Activated CD4-positive, alpha-beta T cell treated with anti-CD3 and anti-CD28 coated beads for 36 hours (primary cell): ENCODE measurements at regions of chr9 and their contacts with region 1.

Region 1: DNA sequence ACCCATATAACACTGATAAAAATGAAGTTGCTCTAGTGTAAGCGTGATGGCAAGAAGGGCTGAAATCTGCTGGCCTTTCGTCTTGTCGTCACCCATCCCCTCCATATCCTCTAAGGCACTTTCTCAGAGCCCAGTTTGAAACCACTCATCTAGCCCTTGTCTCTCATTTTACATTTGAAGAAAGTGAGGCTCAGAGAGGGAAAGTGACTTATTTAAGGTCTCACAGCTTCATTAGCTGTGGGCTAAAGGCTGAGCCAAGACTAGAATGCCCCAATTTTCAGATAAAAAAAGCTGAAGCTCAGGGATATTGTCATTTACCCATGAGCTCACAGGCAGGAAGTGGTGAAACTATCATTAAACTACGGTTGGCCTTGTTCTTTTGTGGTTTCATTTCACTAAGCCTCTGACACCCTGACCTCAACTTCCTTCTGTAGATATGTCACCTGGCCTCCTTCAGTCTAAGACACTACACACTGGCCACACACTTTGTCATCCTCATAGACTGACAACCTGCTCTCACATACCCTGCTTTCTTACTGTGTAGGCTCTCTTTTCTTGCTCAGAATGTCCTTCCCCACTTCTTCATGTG is 176.7 kb upstream of the DMAC1 start:
- DNase-seq: peak; percentile 60
- ATAC-seq: peak; percentile 95
- H3K4me3 Mint-ChIP-seq: peak overlapping the region; percentile 32
- H3K27ac Mint-ChIP-seq: peak overlapping the region; percentile 82
- H3K4me1 Mint-ChIP-seq: peaks cover 62% of the 10 kb centered on the region
- H3K27me3 Mint-ChIP-seq: no peaks in the 10 kb centered on the region

Region 2: DNA sequence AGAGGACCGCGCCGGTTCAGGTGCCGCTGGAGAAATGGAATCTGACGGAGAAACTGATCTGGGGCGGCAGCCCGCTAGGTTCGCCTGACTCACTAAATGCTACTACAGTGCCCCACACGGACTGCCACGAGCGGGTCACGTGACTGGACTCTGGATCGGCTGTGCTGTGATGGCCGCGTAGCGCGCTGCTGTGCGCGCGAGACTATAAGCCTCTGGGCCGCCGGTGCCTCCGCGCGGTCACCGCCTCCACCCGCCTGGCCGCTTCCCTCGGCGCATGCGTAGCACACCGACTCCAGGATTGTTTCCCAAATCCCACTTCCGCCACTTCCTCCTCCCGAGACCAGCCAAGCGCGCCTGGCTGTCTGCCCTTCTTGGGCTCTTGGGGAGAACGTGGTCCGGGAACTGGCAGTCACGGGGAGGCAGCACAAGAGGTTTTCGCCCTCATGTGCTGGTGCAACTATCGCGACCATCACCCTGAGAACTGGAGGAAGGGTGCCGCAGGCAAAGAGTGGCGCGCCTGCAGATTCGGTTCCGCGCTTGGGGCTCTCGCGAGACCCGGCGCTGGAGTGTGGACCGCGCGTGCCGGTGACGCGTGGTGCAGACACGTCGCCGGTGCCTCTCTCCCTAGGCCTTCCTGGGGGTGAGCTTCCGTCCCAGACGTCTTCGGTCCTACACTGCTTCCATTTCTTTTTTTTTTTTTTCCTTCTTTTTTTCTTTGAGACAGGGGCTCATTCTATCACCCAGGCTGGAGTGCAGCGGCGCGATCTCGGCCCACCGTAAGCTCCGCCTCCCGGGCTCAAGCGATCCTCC is 1294.9 kb before region 1 on chr9:
- CTCF ChIA-PET with region 1: no interaction called
- POLR2A ChIA-PET with region 1: no interaction called
- intact Hi-C with region 1: loop called in 1 of 2 experiments (anchors 5 kb)
- DNase-seq: peak; percentile 96
- ATAC-seq: peak; percentile 88
- H3K4me3 Mint-ChIP-seq: peak overlapping the region; percentile 88
- H3K27ac Mint-ChIP-seq: peak overlapping the region; percentile 99
- H3K4me1 Mint-ChIP-seq: peaks cover 19% of the 10 kb centered on the region
- H3K27me3 Mint-ChIP-seq: no peaks in the 10 kb centered on the region

Region 3: GRCh38 chr9:7756088-7756487 is 220.2 kb before region 1 on chr9:
- CTCF ChIA-PET with region 1: no interaction called
- POLR2A ChIA-PET with region 1: no interaction called
- intact Hi-C with region 1: loop called in 1 of 2 experiments (anchors 2 kb)
- DNase-seq: peak; percentile 30
- ATAC-seq: peak; percentile 99
- H3K4me3 Mint-ChIP-seq: no peak overlapping the region
- H3K27ac Mint-ChIP-seq: peak overlapping the region; percentile 74
- H3K4me1 Mint-ChIP-seq: peaks cover 19% of the 10 kb centered on the region
- H3K27me3 Mint-ChIP-seq: no peaks in the 10 kb centered on the region

Region 4: DNA sequence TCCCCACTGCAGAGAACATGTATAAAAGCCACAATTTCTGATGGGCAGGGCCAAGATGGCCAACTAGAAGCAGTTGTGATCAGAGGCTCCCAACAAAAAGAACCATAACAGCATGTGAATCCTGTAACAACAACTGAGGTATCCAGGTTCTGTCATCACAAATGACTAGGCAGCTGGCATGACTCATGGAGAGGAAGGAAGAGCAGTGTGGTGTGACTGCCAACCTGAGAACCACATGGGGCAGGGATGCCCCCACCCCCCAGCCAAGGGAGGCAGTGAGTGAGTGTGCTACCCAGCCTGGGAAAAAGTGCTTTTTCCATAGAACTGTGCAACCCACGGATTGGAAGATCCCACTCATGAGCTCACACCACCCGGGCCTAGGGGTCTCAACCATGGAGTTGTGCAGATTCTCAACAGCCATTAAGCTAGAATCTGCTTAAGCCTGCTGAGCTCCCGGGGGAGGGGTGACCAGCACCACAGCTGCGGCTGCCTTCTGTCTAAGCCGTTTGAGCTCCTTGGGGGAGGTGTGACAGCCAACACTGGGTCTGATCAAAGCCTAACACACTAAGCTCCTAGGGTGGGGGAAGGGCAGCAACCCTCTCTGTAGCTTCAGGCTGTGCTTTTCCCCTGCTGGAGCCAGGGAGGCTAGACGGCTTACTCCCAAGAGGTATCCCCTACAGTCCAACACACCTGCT is 96.6 kb before region 1 on chr9:
- CTCF ChIA-PET with region 1: no interaction called
- POLR2A ChIA-PET with region 1: no interaction called
- intact Hi-C with region 1: loop called in 1 of 2 experiments (anchors 1 kb)
- DNase-seq: peak; percentile 72
- ATAC-seq: peak; percentile 96
- H3K4me3 Mint-ChIP-seq: no peak overlapping the region
- H3K27ac Mint-ChIP-seq: peak overlapping the region; percentile 26
- H3K4me1 Mint-ChIP-seq: peaks cover 12% of the 10 kb centered on the region
- H3K27me3 Mint-ChIP-seq: peaks cover 2% of the 10 kb centered on the region

Region 5: GRCh38 chr9:8115570-8115969 is 139.3 kb after region 1 on chr9:
- CTCF ChIA-PET with region 1: no interaction called
- POLR2A ChIA-PET with region 1: interaction called, 3 read pairs
- intact Hi-C with region 1: loop called (anchors 1 to 10 kb)
- DNase-seq: peak; percentile 13
- ATAC-seq: peak; percentile 80
- H3K4me3 Mint-ChIP-seq: no peak overlapping the region
- H3K27ac Mint-ChIP-seq: peak overlapping the region; percentile 40
- H3K4me1 Mint-ChIP-seq: peaks cover 21% of the 10 kb centered on the region
- H3K27me3 Mint-ChIP-seq: no peaks in the 10 kb centered on the region

Region 6: DNA sequence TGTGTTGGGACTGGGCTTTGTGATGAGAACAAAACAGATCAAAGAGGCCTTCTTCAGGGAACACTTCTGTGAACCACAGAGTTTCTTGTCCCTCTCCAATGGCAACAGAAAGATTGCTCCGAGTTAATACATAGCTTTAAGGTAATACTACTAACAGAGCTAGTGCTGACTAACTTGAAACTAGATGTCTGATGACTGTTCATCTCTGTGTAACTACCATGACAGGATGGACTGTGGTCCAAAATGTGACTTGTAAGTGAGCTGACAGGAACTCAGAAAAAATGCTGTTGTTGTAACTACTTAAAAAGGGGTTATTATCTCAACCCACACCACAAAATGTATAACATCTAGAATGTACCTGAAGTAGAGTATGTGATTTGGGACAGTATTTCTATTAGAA is 453.5 kb after region 1 on chr9:
- CTCF ChIA-PET with region 1: no interaction called
- POLR2A ChIA-PET with region 1: no interaction called
- intact Hi-C with region 1: loop called (anchors 2 to 10 kb)
- DNase-seq: no peak
- ATAC-seq: peak; percentile 73
- H3K4me3 Mint-ChIP-seq: no peak overlapping the region
- H3K27ac Mint-ChIP-seq: no peak overlapping the region
- H3K4me1 Mint-ChIP-seq: peaks cover 30% of the 10 kb centered on the region
- H3K27me3 Mint-ChIP-seq: no peaks in the 10 kb centered on the region